Activated CD8-positive, alpha-beta T cell treated with anti-CD3 and anti-CD28 coated beads for 36 hours (primary cell): ENCODE measurements at regions of chr9 and their contacts with region 1.

Region 1: GRCh38 chr9:115395511-115396021 is 277.6 kb upstream of the TNC start:
- DNase-seq: no peak
- ATAC-seq: no peak
- H3K4me3 Mint-ChIP-seq: no peak overlapping the region
- H3K27ac Mint-ChIP-seq: no peak overlapping the region
- H3K4me1 Mint-ChIP-seq: no peaks in the 10 kb centered on the region
- H3K27me3 Mint-ChIP-seq: peaks cover 3% of the 10 kb centered on the region
- CTCF ChIP-seq: no peak

Region 2: GRCh38 chr9:115313545-115313944 is 82.0 kb before region 1 on chr9:
- CTCF ChIA-PET with region 1: no interaction called
- POLR2A ChIA-PET with region 1: no interaction called
- intact Hi-C with region 1: loop called (anchors 10 kb)
- DNase-seq: no peak
- ATAC-seq: no peak
- H3K4me3 Mint-ChIP-seq: no peak overlapping the region
- H3K27ac Mint-ChIP-seq: no peak overlapping the region
- H3K4me1 Mint-ChIP-seq: no peaks in the 10 kb centered on the region
- H3K27me3 Mint-ChIP-seq: peaks cover 8% of the 10 kb centered on the region
- CTCF ChIP-seq: no peak

Region 3: GRCh38 chr9:115411993-115412452 is 16.5 kb after region 1 on chr9:
- CTCF ChIA-PET with region 1: no interaction called
- POLR2A ChIA-PET with region 1: no interaction called
- intact Hi-C with region 1: no loop called
- DNase-seq: no peak
- ATAC-seq: no peak
- H3K4me3 Mint-ChIP-seq: no peak overlapping the region
- H3K27ac Mint-ChIP-seq: no peak overlapping the region
- H3K4me1 Mint-ChIP-seq: no peaks in the 10 kb centered on the region
- H3K27me3 Mint-ChIP-seq: peaks cover 12% of the 10 kb centered on the region
- CTCF ChIP-seq: no peak